ENCODE measurements at regions of chr1 and their contacts with region 1.

Region 1: GRCh38 chr1:156728597-156729462 is at the start of gene ISG20L2:
- DNase-seq: peak; percentile 99
- H3K4me3 ChIP-seq: peak within 1 kb of the TSS; percentile 64 to 98 (median 94)
- H3K27ac ChIP-seq: peak within 1 kb of the TSS; percentile 76 to 88
- H3K4me1 ChIP-seq: peaks cover 24 to 45% (median 39%) of the 10 kb centered on the region in 4 experiments
- H3K27me3 ChIP-seq: no peaks in the 10 kb centered on the region

Region 2: DNA sequence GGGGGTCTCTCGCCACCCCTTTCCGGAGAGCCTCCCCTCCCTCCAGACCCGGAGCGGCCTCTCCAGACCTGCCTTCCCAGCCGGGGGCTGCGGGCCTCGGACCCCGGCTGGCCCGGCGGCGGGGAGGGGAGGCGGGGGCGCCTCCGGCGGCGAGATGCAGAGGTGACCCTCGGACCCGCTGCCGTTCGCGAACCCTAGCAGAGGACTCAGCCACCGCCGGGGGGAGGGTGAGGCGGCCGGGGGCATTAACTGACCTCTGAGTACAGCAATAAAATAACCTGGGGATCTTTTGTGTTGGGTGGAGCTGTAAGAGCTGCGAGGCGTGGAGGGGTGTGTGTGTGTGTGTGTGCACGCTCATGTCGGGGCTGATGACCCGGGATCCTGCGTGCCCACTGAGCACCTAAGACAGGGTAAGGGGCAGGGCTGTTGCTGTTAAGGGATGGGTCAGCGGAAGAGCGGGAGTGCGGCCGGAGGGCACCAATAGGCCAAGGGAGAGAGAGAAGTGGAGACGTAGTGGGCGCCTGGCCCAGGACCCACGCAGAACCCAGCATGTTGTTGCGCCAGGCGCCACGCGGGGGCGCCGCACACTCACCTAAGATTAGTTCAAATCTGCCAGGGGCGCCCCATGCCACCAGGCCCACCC is 103.3 kb before region 1 on chr1:
- CTCF ChIA-PET with region 1: interaction called, 15 read pairs
- POLR2A ChIA-PET with region 1: interaction called, 3 read pairs
- DNase-seq: peak; percentile 65 to 81 (median 71)
- H3K4me3 ChIP-seq: peak overlapping the region in 2 of 7 experiments; percentile 40 to 45
- H3K27ac ChIP-seq: no peak overlapping the region
- H3K4me1 ChIP-seq: peaks cover 0 to 22% (median 18%) of the 10 kb centered on the region in 4 experiments
- H3K27me3 ChIP-seq: peaks cover under 1 to 59% (median 22%) of the 10 kb centered on the region in 5 experiments

Region 3: GRCh38 chr1:156697481-156697880 is 31.3 kb before region 1 on chr1:
- CTCF ChIA-PET with region 1: interaction called, 393 read pairs
- POLR2A ChIA-PET with region 1: no interaction called
- DNase-seq: no peak
- H3K4me3 ChIP-seq: no peak overlapping the region
- H3K27ac ChIP-seq: no peak overlapping the region
- H3K4me1 ChIP-seq: peaks cover 0 to 16% (median 12%) of the 10 kb centered on the region in 4 experiments
- H3K27me3 ChIP-seq: peaks cover 0 to 43% (median 15%) of the 10 kb centered on the region in 5 experiments

Region 4: DNA sequence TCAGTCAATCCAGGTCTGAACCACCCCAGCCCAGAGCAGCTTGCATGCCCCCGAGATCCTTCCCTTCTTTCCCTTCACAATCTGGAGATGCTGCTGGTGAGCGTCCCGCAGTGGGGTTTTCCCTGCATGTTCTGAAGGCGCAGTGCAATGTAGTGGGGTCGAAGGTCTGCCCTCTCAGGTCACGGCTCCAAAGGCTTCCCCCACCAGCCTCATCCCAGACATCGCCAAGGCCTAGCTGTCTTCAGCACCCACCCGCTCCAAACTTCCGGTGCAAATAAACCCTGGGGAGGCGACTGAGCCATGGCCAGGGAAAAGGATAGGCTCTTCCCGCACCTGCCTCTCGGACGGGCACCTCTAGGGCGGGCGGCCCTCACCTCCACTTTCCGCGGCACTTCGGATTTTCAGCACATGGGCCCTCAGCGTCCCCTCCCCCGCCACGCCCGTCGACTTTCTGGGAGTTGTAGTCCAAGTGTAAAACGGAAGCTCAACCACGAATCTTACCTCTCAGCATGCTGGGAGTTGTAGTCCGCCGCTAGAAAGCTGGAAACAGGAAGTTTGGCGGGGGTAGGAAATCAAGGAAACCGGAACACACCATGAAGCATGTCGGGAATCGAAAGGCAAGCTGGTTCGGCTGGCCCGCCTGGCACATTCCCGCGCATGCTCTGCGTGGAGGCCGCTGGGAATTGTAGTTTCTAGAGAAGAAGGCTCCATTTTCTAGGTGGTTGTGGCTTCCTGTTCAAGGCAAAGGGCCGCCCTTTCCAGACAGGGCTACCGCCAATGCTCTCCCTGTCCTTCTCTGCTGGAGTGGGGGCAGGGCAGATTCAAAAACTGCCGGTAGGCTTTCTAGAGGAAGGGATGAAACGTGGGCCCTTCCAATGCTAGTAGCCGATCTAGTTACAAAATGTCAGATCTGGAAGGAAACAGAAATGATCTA is 12.1 kb after region 1 on chr1 and contains the start of gene MRPL24:
- CTCF ChIA-PET with region 1: interaction called, 25 read pairs
- POLR2A ChIA-PET with region 1: interaction called, 4 read pairs
- DNase-seq: peak; percentile 99 to 100 (median 100)
- H3K4me3 ChIP-seq: peak within 1 kb of the TSS; percentile 63 to 91 (median 83)
- H3K27ac ChIP-seq: peak within 1 kb of the TSS; percentile 52 to 83
- H3K4me1 ChIP-seq: peaks cover 17 to 49% (median 41%) of the 10 kb centered on the region in 4 experiments
- H3K27me3 ChIP-seq: no peaks in the 10 kb centered on the region

Region 5: DNA sequence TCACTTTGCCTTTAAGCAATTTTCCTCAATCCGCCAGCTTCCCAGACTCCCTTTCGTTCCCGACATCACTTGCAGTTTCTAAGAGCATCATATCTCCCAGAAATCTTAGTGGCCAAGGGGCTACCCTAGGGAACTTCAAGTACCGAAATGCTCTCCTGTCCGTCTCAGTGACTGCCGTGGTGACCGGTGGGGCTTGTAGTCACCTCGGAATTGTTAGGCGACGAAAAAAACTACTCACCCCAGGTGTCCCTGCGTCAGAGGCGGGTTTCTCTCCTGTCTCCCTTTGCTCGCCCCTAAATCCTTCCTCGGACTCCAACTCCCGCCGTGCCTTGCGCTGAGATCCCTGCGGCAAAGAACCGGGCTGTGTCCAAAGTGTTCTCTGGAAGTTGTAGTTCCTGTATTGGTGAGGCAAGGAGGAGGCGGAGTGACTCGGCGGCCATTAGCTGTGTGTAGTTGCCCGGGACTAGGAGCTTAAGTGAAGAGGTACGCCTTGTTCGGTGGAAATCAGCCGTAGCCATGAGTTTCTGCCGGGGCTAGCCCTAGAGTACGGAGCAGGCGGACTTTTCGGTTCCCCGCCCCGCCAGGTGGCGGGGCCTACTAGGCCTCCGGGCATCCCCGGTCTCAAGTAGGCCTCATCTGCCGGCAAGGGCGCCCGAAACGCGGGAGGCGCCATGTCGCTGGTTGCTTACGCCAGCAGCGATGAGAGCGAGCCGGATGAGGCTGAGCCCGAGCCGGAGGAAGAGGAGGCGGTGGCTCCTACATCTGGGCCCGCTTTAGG is 38.5 kb after region 1 on chr1 and contains the start of gene PRCC:
- CTCF ChIA-PET with region 1: interaction called, 24 read pairs
- POLR2A ChIA-PET with region 1: interaction called, 8 read pairs
- DNase-seq: peak; percentile 100
- H3K4me3 ChIP-seq: peak within 1 kb of the TSS; percentile 75 to 98 (median 89)
- H3K27ac ChIP-seq: peak within 1 kb of the TSS; percentile 99
- H3K4me1 ChIP-seq: peaks cover 15 to 34% (median 22%) of the 10 kb centered on the region in 4 experiments
- H3K27me3 ChIP-seq: no peaks in the 10 kb centered on the region

Region 6: DNA sequence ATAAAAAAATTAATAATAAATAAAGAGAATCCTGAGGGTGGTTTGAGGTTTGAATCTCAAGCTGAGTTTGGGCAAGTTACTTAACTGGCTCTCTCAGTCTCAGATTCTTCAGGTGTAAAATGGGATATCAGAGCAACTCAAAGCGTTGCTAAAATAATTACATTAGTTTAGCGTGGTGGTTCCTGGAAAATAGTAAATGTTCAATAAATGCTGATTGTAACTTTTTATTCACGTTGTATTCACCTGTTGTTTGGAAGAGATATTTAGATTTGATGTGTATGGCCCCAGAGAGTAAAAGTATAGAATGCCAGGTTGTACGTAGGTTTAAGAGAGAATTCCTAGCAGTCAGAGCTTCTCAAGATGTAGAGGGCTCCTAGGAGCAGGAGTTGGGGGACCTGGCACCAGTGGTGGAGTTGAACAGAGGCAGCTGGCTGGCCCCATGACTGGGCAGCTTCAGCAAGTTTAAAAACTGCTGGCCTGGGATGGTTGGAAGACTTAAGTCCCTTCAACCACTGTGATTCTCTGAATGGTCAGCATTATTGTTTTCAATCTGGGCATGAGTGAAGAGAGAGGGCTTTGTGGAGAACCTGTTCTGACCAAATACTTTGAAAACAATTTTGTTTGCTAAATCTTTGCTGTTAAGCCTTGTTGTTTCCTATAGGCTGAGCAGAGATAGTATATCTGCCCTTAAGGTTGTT is 60.9 kb after region 1 on chr1:
- CTCF ChIA-PET with region 1: interaction called, 32 read pairs
- POLR2A ChIA-PET with region 1: no interaction called
- DNase-seq: no peak
- H3K4me3 ChIP-seq: no peak overlapping the region
- H3K27ac ChIP-seq: no peak overlapping the region
- H3K4me1 ChIP-seq: peaks cover 8 to 22% (median 13%) of the 10 kb centered on the region in 4 experiments
- H3K27me3 ChIP-seq: no peaks in the 10 kb centered on the region

Region 7: DNA sequence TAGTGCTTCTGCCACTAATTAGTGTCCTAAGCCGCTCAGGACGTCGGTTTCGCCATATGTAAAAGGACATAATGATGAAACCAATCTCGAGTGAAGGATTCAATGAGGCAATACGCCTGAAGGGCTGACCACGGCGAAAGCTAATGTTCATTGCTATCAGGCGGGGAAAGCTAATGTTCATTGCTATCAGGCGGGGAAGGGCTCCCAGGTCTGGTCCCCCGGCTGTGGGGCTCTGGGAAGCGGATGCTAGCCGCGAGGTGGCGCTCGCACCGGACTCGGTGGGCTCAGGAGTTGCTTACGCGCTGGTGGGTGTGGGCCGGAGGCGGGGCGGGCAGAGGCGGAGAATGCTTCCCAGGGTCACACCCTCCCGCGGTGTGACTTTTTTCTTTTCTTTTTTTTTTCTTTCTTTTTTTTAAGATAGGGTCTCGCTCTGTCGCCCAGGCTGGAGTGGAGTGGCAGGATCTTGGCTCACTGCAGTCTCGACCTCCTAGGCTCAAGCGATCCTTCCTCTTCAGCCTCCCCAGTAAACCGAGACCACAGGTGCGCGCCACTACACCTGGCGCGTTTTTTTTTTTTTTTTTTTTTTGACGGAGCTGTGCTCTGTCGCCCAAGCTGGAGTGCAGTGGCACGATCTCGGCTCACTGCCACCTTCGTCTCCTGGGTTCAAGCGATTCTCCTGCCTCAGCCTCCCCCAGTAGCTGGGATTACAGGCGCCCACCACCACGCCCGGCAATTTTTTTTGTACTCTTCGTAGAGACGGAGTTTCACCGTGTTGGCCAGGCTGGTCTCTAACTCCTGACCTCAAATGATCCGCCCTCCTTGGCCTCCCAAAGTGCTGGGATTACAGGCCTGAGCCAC is 163.6 kb after region 1 on chr1:
- CTCF ChIA-PET with region 1: interaction called, 31 read pairs
- POLR2A ChIA-PET with region 1: no interaction called
- DNase-seq: peak; percentile 91 to 96 (median 93)
- H3K4me3 ChIP-seq: peak overlapping the region in 5 of 7 experiments; percentile 38 to 78 (median 66)
- H3K27ac ChIP-seq: peak overlapping the region in 1 of 2 experiments; percentile 62
- H3K4me1 ChIP-seq: peaks cover 6 to 44% (median 42%) of the 10 kb centered on the region in 4 experiments
- H3K27me3 ChIP-seq: peaks cover 0 to 20% (median 9%) of the 10 kb centered on the region in 5 experiments

Measured in common myeloid progenitor, CD34-positive (primary cell).